Spleen (tissue), 13 donors: ENCODE measurements at regions of chr14 and their contacts with region 1.

Region 1: GRCh38 chr14:50003213-50004031 is 110.5 kb downstream of the ARF6 start:
- DNase-seq: peak; percentile 97
- H3K4me3 ChIP-seq: peak overlapping the region; percentile 23 to 70 (median 50)
- H3K27ac ChIP-seq: peak overlapping the region; percentile 86 to 96 (median 92)
- H3K4me1 ChIP-seq: peaks cover 45 to 73% (median 62%) of the 10 kb centered on the region in 6 donors
- H3K27me3 ChIP-seq: no peaks in the 10 kb centered on the region
- CTCF ChIP-seq: peak in 9 of 11 experiments; percentile 33 to 70 (median 55)
- POLR2A ChIP-seq: peak in 2 of 3 donors; percentile 13 to 61

Region 2: DNA sequence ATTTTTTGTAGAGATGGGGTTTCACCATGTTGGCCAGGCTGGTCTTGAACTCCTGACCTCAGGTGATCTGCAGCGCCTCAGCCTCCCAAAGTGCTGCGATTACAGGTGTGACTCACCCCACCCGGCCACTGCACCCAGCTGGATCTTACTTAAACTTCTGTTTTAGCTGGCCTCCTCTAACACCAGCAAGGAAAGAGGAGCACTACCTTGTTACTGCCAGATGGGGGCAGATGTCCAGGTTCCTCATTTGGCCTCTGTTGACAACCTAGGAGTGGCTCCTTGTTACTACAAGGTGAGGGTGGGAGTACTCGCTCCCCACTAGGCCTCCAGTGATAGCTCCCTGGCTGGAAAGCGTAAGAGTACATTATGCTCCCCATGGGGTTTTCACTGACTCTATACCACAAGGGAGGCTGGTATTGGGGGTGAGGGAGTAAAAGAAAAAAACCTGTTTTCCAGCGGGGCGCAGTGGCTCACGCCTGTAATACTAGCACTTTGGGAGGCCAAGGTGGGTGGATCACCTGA is 123.7 kb before region 1 on chr14:
- intact Hi-C with region 1: loop called (anchors 10 kb)
- DNase-seq: no peak
- H3K4me3 ChIP-seq: no peak overlapping the region
- H3K27ac ChIP-seq: peak overlapping the region in 4 of 8 donors; percentile 15 to 63 (median 44)
- H3K4me1 ChIP-seq: peaks cover 0 to 18% (median 8%) of the 10 kb centered on the region in 6 donors
- H3K27me3 ChIP-seq: no peaks in the 10 kb centered on the region
- CTCF ChIP-seq: peak; percentile 50 to 80 (median 69)
- POLR2A ChIP-seq: no peak

Region 3: GRCh38 chr14:50072395-50072794 is 69.0 kb after region 1 on chr14:
- intact Hi-C with region 1: no loop called
- DNase-seq: no peak
- H3K4me3 ChIP-seq: no peak overlapping the region
- H3K27ac ChIP-seq: peak overlapping the region in 1 of 8 donors; percentile 22
- H3K4me1 ChIP-seq: peaks cover 0 to 9% (median 0%) of the 10 kb centered on the region in 6 donors
- H3K27me3 ChIP-seq: no peaks in the 10 kb centered on the region
- CTCF ChIP-seq: no peak
- POLR2A ChIP-seq: no peak